ENCODE measurements at regions of chr5 and their contacts with region 1.

Region 1: GRCh38 chr5:128224336-128224735 is 140.8 kb downstream of the SLC12A2 start:
- DNase-seq: no peak
- H3K4me3 ChIP-seq: no peak overlapping the region
- H3K27ac ChIP-seq: no peak overlapping the region
- H3K4me1 ChIP-seq: peaks cover 0 to 13% (median 0%) of the 10 kb centered on the region in 3 donors
- H3K27me3 ChIP-seq: no peaks in the 10 kb centered on the region
- CTCF ChIP-seq: no peak
- POLR2A ChIP-seq: no peak

Region 2: GRCh38 chr5:128844354-128844923 is 620.1 kb after region 1 on chr5:
- intact Hi-C with region 1: loop called (anchors 5 kb)
- DNase-seq: no peak
- H3K4me3 ChIP-seq: no peak overlapping the region
- H3K27ac ChIP-seq: no peak overlapping the region
- H3K4me1 ChIP-seq: no peaks in the 10 kb centered on the region
- H3K27me3 ChIP-seq: no peaks in the 10 kb centered on the region
- CTCF ChIP-seq: peak in 4 of 6 experiments; percentile 18 to 52 (median 31)
- POLR2A ChIP-seq: no peak

Measured in esophagus squamous epithelium (tissue), 5 donors.